ENCODE measurements at regions of chr16 and their contacts with region 1.

Region 1: DNA sequence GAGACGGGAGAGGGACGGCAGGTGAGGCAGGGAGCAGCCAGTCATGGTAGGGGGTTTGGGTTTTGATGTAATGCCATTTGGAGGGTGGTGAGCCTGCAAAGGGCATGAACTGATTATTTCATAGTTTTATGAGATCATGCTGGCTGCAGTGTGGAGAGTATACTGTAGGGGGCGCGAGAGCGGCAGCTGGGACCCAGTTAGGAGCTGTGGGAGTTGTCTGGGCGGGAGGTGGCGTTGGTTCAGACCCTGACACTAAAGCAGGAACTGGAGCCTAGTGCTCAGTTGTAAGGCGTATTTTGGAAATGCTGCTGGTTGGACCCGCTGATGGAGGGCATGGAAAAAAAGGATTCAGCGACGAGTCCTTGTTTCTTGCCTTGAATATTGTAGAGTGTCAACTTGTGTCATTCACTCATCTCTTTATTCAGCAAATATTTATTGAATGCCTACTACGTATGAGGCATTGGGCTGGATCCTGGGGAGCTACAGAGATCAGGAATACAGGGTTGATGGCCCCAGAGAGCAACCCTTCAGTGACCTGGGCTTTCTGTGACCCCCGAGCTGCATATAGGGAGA is 23.7 kb upstream of the KDM8 start:
- DNase-seq: no peak
- H3K4me3 ChIP-seq: no peak overlapping the region
- CTCF ChIP-seq: peak; percentile 76

Region 2: GRCh38 chr16:27164352-27164751 is 15.2 kb before region 1 on chr16:
- CTCF ChIA-PET with region 1: interaction called, 17 read pairs
- POLR2A ChIA-PET with region 1: no interaction called
- DNase-seq: no peak
- H3K4me3 ChIP-seq: no peak overlapping the region
- CTCF ChIP-seq: no peak

Region 3: GRCh38 chr16:27203429-27204231 is 24.0 kb after region 1 on chr16 and contains the start of gene KDM8:
- CTCF ChIA-PET with region 1: interaction called, 11 read pairs
- POLR2A ChIA-PET with region 1: interaction called, 3 read pairs
- DNase-seq: peak; percentile 96
- H3K4me3 ChIP-seq: peak within 1 kb of the TSS; percentile 99
- CTCF ChIP-seq: no peak